ENCODE measurements at regions of chr15 and their contacts with region 1.

Region 1: DNA sequence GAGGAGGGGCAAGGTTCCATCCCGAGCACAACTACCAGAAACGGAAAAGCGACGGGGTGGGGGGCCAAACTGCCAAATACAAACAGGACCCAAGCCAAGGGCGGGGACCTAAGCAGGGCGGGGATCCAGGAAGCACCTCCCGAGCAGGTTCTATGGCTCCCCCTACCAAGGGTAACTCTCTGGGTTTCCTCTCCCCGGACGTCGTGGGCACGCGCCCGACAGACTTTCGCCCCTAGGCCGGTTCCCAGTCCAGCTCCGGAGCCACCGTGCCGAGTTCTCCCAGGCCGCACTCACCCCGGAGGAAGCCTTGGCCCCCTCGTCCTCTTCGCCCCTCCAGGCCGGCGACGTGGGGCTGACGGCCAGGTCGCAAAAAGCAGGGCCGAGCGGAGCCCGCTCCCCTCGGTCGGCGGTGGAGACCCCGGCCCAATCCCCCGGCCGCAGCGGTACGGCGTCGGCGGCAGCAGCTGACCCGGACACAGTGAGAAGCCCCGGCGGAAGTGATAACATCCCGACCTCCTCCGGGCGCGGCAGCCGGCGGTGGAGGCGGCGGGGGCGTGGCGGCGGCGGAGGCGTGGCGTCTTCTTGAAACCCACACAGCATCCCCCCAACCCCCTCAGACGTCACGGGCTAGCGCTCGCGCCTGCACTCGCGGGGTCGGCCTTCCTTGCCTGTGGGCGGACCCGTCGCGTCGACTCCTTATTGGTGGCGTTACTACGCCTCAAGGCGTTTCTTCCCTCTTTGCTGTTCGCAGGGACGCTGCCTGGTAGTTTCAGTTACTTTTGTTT is at the start of gene BNIP2:
- DNase-seq: peak; percentile 100
- H3K4me3 Mint-ChIP-seq: peak within 1 kb of the TSS; percentile 93
- H3K27ac Mint-ChIP-seq: peak within 1 kb of the TSS; percentile 96
- H3K4me1 Mint-ChIP-seq: peaks cover 47% of the 10 kb centered on the region
- H3K27me3 Mint-ChIP-seq: no peaks in the 10 kb centered on the region
- total RNA-seq, gene BNIP2: 83.3 to 84.5 TPM

Region 2: GRCh38 chr15:59656897-59657634 is 32.0 kb before region 1 on chr15 and contains the start of gene GTF2A2:
- CTCF ChIA-PET with region 1: interaction called, 6 read pairs
- POLR2A ChIA-PET with region 1: interaction called, 69 read pairs
- DNase-seq: peak; percentile 97
- H3K4me3 Mint-ChIP-seq: no peak within 1 kb of the TSS
- H3K27ac Mint-ChIP-seq: peak within 1 kb of the TSS; percentile 82
- H3K4me1 Mint-ChIP-seq: peaks cover 13% of the 10 kb centered on the region
- H3K27me3 Mint-ChIP-seq: no peaks in the 10 kb centered on the region
- total RNA-seq, gene GTF2A2: 113 to 117 TPM

Region 3: DNA sequence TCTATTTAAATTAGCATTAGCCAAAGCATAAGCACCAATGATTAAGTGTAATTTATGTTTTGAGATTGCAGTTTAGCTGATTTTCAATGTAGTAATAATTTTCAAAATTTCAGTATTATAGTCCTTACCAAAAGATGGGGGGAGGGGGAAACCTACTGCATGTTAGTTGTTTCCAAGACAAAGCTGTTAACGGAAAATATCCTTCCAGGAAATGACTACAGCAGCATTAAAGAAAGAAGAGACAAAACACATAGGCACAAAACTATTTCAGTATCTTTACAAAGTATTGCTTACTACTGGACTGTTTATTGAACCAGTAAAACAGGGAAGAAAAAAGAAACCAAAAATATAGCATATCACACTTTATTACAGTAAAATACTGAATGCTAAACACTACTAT is 10.4 kb before region 1 on chr15:
- CTCF ChIA-PET with region 1: interaction called, 3 read pairs
- POLR2A ChIA-PET with region 1: interaction called, 33 read pairs
- DNase-seq: no peak
- H3K4me3 Mint-ChIP-seq: no peak overlapping the region
- H3K27ac Mint-ChIP-seq: peak overlapping the region; percentile 77
- H3K4me1 Mint-ChIP-seq: peaks cover 23% of the 10 kb centered on the region
- H3K27me3 Mint-ChIP-seq: no peaks in the 10 kb centered on the region

Region 4: DNA sequence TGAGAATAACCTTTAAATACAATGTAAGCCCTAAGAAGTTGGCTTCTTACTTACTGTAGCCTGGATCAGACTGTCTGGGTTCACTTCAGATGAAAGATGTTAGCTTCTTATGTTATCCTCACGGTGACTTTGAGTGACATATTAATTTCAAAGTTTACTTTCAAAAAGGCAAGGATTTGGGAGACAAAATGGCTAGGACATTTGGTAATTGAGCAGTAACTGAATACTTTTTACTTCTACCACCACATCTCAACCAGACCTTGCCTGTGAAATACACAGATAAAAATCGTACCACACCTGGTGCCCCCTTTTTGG is 36.1 kb after region 1 on chr15:
- CTCF ChIA-PET with region 1: interaction called, 15 read pairs
- POLR2A ChIA-PET with region 1: no interaction called
- DNase-seq: no peak
- H3K4me3 Mint-ChIP-seq: no peak overlapping the region
- H3K27ac Mint-ChIP-seq: no peak overlapping the region
- H3K4me1 Mint-ChIP-seq: no peaks in the 10 kb centered on the region
- H3K27me3 Mint-ChIP-seq: peaks cover 23% of the 10 kb centered on the region

Region 5: GRCh38 chr15:59958288-59958687 is 269.3 kb after region 1 on chr15:
- CTCF ChIA-PET with region 1: no interaction called
- POLR2A ChIA-PET with region 1: no interaction called
- DNase-seq: no peak
- H3K4me3 Mint-ChIP-seq: no peak overlapping the region
- H3K27ac Mint-ChIP-seq: no peak overlapping the region
- H3K4me1 Mint-ChIP-seq: peaks cover 3% of the 10 kb centered on the region
- H3K27me3 Mint-ChIP-seq: peaks cover 37% of the 10 kb centered on the region

Region 6: DNA sequence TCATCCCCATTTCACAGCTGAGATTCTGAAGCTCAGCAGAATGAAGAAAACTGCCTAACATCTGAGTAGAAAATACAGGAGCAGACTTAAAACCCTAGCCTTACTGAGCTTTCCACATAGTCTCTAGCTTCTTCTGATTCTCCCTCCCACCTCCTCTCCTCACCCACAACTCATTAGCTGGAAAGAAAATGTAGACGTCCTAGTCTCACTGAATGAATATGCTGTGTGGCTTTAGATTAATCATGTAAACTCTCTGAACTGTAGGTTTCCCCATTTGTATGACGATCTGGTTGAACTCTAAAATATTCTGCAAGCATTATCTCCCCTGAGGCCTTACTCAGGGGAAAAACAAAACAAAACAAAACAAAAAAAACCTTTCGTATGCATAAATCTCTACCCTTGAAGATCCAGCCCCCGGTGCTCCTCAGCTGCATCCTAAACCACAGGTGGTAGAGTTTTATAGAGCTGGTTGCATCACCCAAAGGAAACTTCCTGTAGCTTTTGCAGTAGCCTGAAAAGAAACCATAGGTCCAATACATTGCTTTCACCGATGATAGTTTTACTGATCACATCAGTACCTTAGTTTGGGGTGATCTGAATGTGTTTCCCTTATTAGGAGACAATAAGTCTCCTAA is 355.7 kb after region 1 on chr15:
- CTCF ChIA-PET with region 1: no interaction called
- POLR2A ChIA-PET with region 1: no interaction called
- DNase-seq: peak; percentile 55
- H3K4me3 Mint-ChIP-seq: peak overlapping the region; percentile 54
- H3K27ac Mint-ChIP-seq: peak overlapping the region; percentile 75
- H3K4me1 Mint-ChIP-seq: peaks cover 25% of the 10 kb centered on the region
- H3K27me3 Mint-ChIP-seq: peaks cover 7% of the 10 kb centered on the region